ENCODE measurements at regions of chr2 and their contacts with region 1.

Region 1: DNA sequence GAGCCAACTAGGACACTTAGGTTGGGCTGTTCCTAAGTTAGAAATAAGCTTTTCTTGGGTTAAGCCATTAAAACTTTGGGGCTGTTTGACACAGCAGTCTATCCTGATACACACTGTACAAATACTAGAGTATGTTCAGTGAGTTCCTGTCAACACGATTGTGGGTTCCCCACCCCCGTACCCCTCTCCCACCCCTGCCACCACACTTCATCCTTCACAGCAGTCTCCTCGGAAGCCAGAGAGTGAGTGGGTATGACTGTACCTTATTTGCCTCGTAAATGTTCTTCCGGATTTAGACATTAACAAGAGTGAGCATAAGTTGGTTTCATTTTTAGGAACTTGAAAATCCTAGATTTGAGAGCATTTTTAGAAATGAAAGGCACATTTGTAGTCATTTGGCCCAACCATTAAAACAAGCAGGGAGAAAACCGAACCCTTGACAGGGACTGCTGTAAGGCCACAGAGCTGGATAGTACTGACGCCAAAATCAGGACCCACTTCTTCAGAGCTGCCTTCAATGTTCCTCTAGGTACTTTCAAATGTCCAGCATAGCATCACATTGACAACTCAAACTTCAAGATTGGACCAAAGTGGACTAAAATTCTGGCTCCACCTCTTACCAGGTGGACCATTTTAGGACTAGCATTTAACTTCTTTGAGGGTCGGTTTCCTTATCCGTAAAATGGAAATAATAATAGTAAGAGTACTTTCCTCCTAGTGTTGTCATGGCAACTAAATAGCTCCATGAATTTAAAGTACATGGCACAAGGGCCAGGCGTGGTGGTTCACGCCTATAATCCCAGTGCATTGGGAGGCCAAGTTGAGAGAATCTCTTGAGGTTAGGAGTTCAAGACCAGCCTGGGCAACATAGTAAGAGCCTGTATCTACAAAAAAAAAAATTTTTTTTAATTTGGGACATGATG is 166.3 kb upstream of the SERTAD2 start:
- DNase-seq: no peak
- H3K4me3 ChIP-seq: no peak overlapping the region
- H3K27me3 ChIP-seq: no peaks in the 10 kb centered on the region
- CTCF ChIP-seq: no peak

Region 2: GRCh38 chr2:64807417-64807816 is 12.6 kb before region 1 on chr2:
- CTCF ChIA-PET with region 1: interaction called, 13 read pairs
- POLR2A ChIA-PET with region 1: no interaction called
- DNase-seq: peak; percentile 97
- H3K4me3 ChIP-seq: no peak overlapping the region
- H3K27me3 ChIP-seq: no peaks in the 10 kb centered on the region
- CTCF ChIP-seq: peak; percentile 18; the same call in 1 of the 2 replicates

Region 3: DNA sequence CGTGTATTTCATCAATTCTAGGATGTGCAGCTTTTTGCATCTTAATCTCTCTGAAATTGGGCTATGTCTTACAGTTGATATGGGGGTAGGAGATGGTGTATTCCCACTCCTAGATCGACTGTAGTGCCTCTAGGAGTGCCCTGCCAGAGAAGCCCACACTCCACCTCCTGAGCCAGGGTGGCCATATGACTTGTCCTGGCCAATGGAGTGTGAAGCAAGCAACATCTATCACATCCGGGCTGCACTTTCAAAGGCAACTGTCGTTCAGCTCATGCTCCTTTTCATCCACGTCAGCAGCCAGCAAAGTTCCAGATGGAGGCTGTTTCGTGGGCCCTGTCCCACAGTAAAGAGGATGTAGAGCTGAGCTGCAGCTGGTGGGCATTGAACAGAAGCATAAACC is 19.8 kb after region 1 on chr2:
- CTCF ChIA-PET with region 1: no interaction called
- POLR2A ChIA-PET with region 1: no interaction called
- DNase-seq: no peak
- H3K4me3 ChIP-seq: no peak overlapping the region
- H3K27me3 ChIP-seq: no peaks in the 10 kb centered on the region
- CTCF ChIP-seq: no peak

Region 4: DNA sequence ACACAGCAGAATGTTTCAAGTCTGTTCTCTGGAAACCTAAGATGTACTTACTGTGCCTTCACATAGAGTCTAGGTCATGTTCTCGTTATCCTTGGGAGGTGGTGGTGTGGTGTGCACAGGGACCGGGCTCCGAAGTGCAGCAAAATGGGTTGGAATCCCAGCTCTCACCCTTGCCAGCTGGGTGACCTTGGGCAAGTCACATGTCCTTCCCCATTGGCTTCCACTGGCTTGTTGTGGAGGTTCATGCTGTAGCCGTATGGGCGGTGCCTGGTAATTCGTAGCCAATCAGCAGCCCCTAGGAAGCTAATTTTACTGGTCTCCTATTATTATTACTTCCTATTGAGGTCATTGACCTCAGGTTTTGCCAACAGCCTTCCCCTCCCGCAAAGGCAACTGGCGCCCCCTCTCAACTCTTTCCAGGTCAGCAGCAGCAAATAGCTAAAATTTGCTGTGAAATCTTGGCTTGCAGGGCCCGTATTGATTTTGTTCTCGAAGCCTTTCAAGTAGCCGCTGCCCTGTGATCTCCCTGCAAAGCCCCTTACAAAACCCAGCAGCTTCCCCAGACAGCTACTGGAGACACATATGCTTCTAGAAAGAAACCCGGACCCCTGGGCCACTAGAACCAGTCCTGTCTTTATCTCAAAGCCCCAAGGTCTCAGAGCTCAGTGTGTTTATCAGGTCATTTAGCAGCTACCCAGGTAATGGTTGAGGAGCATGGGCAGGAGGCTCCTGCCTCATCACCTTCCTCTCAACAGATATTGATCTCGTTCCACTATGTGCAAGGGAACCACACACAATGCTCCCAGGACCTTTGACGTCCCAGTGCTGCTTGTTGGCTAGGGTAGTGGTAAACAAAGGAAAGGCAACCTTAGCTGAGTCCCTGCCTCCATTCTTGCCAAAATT is 102.7 kb after region 1 on chr2:
- CTCF ChIA-PET with region 1: no interaction called
- POLR2A ChIA-PET with region 1: no interaction called
- DNase-seq: no peak
- H3K4me3 ChIP-seq: no peak overlapping the region
- H3K27me3 ChIP-seq: peaks cover 10% of the 10 kb centered on the region
- CTCF ChIP-seq: no peak

Measured in BJ (cell line).